GM12878 (cell line): ENCODE measurements at regions of chr15 and their contacts with region 1.

Region 1: GRCh38 chr15:70466895-70467529 is 296.3 kb downstream of the UACA start:
- DNase-seq: no peak
- ATAC-seq: peak; percentile 66
- H3K4me3 ChIP-seq: no peak overlapping the region
- H3K27ac ChIP-seq: no peak overlapping the region
- H3K4me1 ChIP-seq: peaks cover 36% of the 10 kb centered on the region
- H3K27me3 ChIP-seq: no peaks in the 10 kb centered on the region
- CTCF ChIP-seq: peak; percentile 66 to 78 (median 72)
- EP300 ChIP-seq: no peak
- POLR2A ChIP-seq: no peak
- RAD21 ChIP-seq: peak; percentile 71

Region 2: GRCh38 chr15:69475769-69476358 is 991.1 kb before region 1 on chr15:
- CTCF ChIA-PET with region 1: interaction called, 8 read pairs
- POLR2A ChIA-PET with region 1: no interaction called
- RAD21 ChIA-PET with region 1: interaction called, 4 read pairs
- SMC1A ChIA-PET with region 1: interaction called, 5 read pairs
- in situ Hi-C with region 1: no loop called
- intact Hi-C with region 1: loop called (anchors 5 kb)
- DNase-seq: no peak
- ATAC-seq: peak; percentile 89
- H3K4me3 ChIP-seq: no peak overlapping the region
- H3K27ac ChIP-seq: no peak overlapping the region
- H3K4me1 ChIP-seq: no peaks in the 10 kb centered on the region
- H3K27me3 ChIP-seq: no peaks in the 10 kb centered on the region
- CTCF ChIP-seq: peak; percentile 95 to 97 (median 97); a peak in 5 of 6 replicates
- EP300 ChIP-seq: no peak
- POLR2A ChIP-seq: no peak
- RAD21 ChIP-seq: peak; percentile 91

Region 3: DNA sequence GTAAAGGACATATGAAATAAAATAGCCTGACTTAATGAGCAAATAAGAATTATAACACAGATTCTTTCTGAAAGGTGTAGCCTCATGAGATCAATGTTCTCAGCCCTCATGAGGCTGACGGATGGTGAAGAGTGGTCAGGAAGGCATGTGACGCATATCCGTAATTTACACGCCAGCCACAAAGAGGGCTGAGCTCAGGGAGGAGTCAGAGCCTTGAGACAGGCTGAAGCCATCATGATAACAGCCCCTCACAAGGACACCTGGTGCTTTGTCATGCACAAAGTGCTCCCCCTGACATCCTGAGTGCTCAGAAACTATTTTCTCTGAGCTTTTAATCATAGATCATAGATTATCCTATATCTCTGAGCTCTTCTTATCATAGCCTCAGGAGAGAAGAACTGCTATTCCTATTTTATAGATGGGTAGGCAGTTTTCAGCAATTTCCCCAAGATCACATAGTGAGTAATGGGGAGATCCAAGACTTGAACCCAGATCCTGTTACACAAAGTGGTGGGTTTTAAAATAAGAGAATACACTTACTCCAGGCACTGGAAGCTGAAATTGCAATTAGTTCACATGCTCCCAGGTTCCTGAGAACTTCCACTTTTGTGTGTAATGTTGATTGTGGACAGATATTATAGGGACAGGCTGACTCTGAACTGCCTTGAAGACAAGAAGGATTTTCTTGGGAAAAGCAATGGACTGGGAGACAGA is 747.3 kb before region 1 on chr15:
- CTCF ChIA-PET with region 1: interaction called, 13 read pairs
- POLR2A ChIA-PET with region 1: no interaction called
- RAD21 ChIA-PET with region 1: no interaction called
- SMC1A ChIA-PET with region 1: no interaction called
- in situ Hi-C with region 1: no loop called
- intact Hi-C with region 1: no loop called
- DNase-seq: no peak
- ATAC-seq: peak; percentile 86
- H3K4me3 ChIP-seq: no peak overlapping the region
- H3K27ac ChIP-seq: no peak overlapping the region
- H3K4me1 ChIP-seq: peaks cover 22% of the 10 kb centered on the region
- H3K27me3 ChIP-seq: no peaks in the 10 kb centered on the region
- CTCF ChIP-seq: no peak
- EP300 ChIP-seq: peak in 1 of 2 experiments; percentile 19; a peak in 1 of 4 replicates
- POLR2A ChIP-seq: no peak
- RAD21 ChIP-seq: no peak

Region 4: DNA sequence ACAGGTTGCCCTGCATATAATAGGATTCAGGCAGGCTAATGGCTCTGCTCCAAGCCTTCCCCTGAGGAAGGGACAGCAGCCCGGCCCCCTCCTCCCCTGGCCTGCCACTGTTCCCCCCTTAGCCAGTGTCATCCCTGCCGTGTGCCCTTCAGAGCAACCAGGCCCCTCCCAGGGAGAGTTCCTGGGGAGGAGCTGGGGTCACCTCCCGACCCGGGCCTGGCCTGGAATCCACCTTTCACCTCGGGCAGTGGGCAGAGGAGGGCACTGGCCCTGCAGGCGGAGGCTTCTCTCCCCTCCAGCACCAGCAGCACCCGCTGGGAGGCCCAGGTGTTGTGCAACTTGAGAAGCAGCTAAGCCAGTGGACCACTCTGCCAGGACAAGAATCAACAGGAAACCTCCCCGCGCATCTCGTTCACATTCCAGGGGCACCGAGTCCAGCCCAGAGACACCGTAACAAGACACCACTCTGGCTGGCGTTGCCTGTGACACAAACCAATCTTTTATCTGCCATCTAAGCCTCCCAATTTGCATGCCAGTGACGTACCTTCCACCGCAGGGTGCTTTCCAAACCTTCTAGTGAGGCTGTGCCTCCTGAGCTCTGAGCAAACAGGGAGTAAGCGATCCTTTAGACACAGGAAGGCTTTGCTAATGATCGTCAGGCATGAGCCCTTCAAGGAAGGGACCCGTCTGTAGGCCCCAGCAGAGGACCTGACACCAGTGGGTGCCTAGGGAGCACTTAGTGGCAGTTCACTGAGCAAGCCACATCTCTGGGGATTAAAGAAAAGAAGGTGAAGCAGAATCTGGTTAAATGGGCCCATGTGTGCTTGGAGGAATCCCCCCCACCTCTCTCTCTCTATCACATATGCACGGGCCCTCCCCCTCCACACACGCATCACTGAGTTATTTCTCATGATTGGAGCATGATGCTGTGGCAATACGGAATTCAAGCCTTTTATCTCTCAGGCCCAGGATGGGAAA is 270.4 kb before region 1 on chr15:
- CTCF ChIA-PET with region 1: no interaction called
- POLR2A ChIA-PET with region 1: no interaction called
- RAD21 ChIA-PET with region 1: interaction called, 3 read pairs
- SMC1A ChIA-PET with region 1: no interaction called
- in situ Hi-C with region 1: no loop called
- intact Hi-C with region 1: loop called (anchors 5 kb)
- DNase-seq: peak; percentile 90
- ATAC-seq: peak; percentile 95
- H3K4me3 ChIP-seq: no peak overlapping the region
- H3K27ac ChIP-seq: peak overlapping the region; percentile 45
- H3K4me1 ChIP-seq: peaks cover 25% of the 10 kb centered on the region
- H3K27me3 ChIP-seq: no peaks in the 10 kb centered on the region
- CTCF ChIP-seq: no peak
- EP300 ChIP-seq: peak; percentile 63 to 78; a peak in 3 of 4 replicates
- POLR2A ChIP-seq: peak; percentile 39; the same call in 1 of the 2 replicates
- RAD21 ChIP-seq: no peak

Region 5: DNA sequence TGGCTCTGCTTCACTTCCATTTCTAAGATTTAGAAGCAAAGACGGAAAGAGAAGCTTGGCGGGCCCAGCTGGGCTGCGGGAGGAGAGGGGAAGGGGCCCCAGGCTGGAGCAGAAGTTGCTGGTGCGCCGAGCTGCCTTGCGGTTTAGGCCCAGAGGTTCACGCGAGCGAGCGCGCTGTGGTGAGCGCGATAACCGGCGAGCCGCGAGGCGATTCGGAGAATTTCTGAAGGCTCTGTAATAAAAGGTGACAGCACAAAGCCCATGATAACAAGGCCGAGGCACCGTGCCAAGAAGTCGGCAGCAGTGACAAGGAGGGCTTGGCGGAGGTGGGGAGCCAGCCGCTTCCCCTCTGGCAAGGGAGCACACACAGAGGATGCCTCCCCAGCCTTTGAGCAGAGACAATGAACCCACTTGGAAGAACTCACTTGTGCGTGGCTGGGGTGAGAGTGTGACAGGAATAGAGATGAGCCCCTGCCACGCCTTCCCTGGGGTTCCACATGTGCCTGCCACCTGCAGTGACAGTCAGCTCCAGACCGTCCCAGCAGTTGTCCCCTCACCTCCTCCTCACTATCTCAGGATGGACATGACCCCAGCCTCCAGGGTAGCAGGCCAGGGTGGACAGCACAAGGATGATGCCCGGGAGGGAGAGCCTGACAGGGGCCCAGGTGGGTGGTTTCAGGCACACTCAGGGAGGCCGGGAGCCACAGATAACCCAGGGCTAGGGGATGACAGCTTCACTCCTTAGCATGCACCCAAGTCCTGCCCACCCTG is 18.9 kb before region 1 on chr15:
- CTCF ChIA-PET with region 1: no interaction called
- POLR2A ChIA-PET with region 1: no interaction called
- RAD21 ChIA-PET with region 1: no interaction called
- SMC1A ChIA-PET with region 1: no interaction called
- in situ Hi-C with region 1: no loop called
- intact Hi-C with region 1: no loop called
- DNase-seq: no peak
- ATAC-seq: no peak
- H3K4me3 ChIP-seq: no peak overlapping the region
- H3K27ac ChIP-seq: no peak overlapping the region
- H3K4me1 ChIP-seq: no peaks in the 10 kb centered on the region; the same call in 1 of the 2 replicates
- H3K27me3 ChIP-seq: peaks cover 8 to 19% of the 10 kb centered on the region in 2 experiments
- CTCF ChIP-seq: no peak
- EP300 ChIP-seq: no peak
- POLR2A ChIP-seq: no peak
- RAD21 ChIP-seq: no peak

Region 6: GRCh38 chr15:70504299-70504951 is 37.4 kb after region 1 on chr15:
- CTCF ChIA-PET with region 1: interaction called, 7 read pairs
- POLR2A ChIA-PET with region 1: interaction called, 4 read pairs
- RAD21 ChIA-PET with region 1: interaction called, 12 read pairs
- SMC1A ChIA-PET with region 1: interaction called, 3 read pairs
- in situ Hi-C with region 1: no loop called
- intact Hi-C with region 1: no loop called
- DNase-seq: no peak
- ATAC-seq: peak; percentile 79
- H3K4me3 ChIP-seq: peak overlapping the region; percentile 30; the same call in 1 of the 2 replicates
- H3K27ac ChIP-seq: peak overlapping the region; percentile 91
- H3K4me1 ChIP-seq: peaks cover 53% of the 10 kb centered on the region
- H3K27me3 ChIP-seq: no peaks in the 10 kb centered on the region
- CTCF ChIP-seq: no peak
- EP300 ChIP-seq: no peak
- POLR2A ChIP-seq: peak; percentile 88
- RAD21 ChIP-seq: no peak

Region 7: GRCh38 chr15:70617076-70617910 is 150.3 kb after region 1 on chr15:
- CTCF ChIA-PET with region 1: no interaction called
- POLR2A ChIA-PET with region 1: no interaction called
- RAD21 ChIA-PET with region 1: no interaction called
- SMC1A ChIA-PET with region 1: no interaction called
- in situ Hi-C with region 1: no loop called
- intact Hi-C with region 1: no loop called
- DNase-seq: no peak
- ATAC-seq: no peak
- H3K4me3 ChIP-seq: no peak overlapping the region
- H3K27ac ChIP-seq: no peak overlapping the region
- H3K4me1 ChIP-seq: no peaks in the 10 kb centered on the region
- H3K27me3 ChIP-seq: peaks cover 0 to 3% of the 10 kb centered on the region in 2 experiments; a peak in 1 of 4 replicates
- CTCF ChIP-seq: no peak
- EP300 ChIP-seq: no peak
- POLR2A ChIP-seq: no peak
- RAD21 ChIP-seq: no peak